ENCODE measurements at regions of chr7 and their contacts with region 1.

Region 1: DNA sequence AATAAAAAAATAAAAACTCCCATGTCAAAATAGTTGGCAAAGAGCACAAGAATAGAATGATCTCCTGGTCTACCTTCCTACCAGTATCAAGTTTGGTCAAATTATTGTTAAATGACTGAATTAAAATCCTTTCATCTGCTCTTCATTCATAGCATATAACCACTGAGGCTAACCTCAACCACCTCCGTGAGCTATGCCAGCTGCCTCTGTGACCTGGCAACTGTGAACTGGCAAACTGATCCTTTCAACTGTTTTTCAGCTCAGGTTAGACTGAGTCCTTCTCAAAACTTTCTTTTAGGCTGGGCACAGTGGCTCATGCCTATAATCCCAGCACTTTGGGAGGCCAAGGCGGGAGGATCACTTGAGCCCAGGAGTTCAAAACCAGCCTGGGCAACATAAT is 36.1 kb downstream of the NUDCD3 start:
- DNase-seq: peak; percentile 69
- ATAC-seq: peak; percentile 77
- H3K4me3 Mint-ChIP-seq: no peak overlapping the region
- H3K27ac Mint-ChIP-seq: no peak overlapping the region
- H3K4me1 Mint-ChIP-seq: peaks cover 54% of the 10 kb centered on the region
- H3K27me3 Mint-ChIP-seq: no peaks in the 10 kb centered on the region
- CTCF ChIP-seq: no peak

Region 2: GRCh38 chr7:44284216-44284615 is 170.1 kb before region 1 on chr7:
- CTCF ChIA-PET with region 1: no interaction called
- POLR2A ChIA-PET with region 1: no interaction called
- intact Hi-C with region 1: no loop called
- DNase-seq: no peak
- ATAC-seq: no peak
- H3K4me3 Mint-ChIP-seq: no peak overlapping the region
- H3K27ac Mint-ChIP-seq: no peak overlapping the region
- H3K4me1 Mint-ChIP-seq: no peaks in the 10 kb centered on the region
- H3K27me3 Mint-ChIP-seq: no peaks in the 10 kb centered on the region
- CTCF ChIP-seq: no peak

Region 3: DNA sequence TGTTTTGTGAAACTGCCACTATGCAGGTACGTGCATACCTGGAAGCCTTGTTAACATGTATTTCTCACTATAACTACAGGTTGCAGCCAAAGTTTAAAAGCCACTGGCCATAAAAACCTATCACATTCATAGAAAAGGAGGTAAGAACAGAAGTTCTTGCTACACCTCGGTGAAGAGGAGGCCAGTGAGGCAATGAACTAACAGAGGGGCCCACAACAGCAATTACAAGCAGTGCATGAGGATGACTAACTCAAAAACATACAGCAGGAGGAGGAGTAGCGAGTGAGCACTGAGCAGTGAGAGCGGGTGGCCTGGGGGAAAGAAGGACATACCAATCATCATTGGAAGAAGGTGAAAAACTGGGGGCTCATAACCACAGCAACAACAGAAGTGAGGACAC is 15.5 kb before region 1 on chr7:
- CTCF ChIA-PET with region 1: no interaction called
- POLR2A ChIA-PET with region 1: no interaction called
- intact Hi-C with region 1: no loop called
- DNase-seq: no peak
- ATAC-seq: peak; percentile 45
- H3K4me3 Mint-ChIP-seq: no peak overlapping the region
- H3K27ac Mint-ChIP-seq: no peak overlapping the region
- H3K4me1 Mint-ChIP-seq: peaks cover 54% of the 10 kb centered on the region
- H3K27me3 Mint-ChIP-seq: no peaks in the 10 kb centered on the region
- CTCF ChIP-seq: no peak

Region 4: GRCh38 chr7:44490351-44491200 is 36.2 kb after region 1 on chr7 and contains the start of gene NUDCD3:
- CTCF ChIA-PET with region 1: no interaction called
- POLR2A ChIA-PET with region 1: interaction called, 10 read pairs
- intact Hi-C with region 1: no loop called
- DNase-seq: peak; percentile 86
- ATAC-seq: peak; percentile 78
- H3K4me3 Mint-ChIP-seq: peak within 1 kb of the TSS; percentile 92
- H3K27ac Mint-ChIP-seq: peak within 1 kb of the TSS; percentile 97
- H3K4me1 Mint-ChIP-seq: peaks cover 40% of the 10 kb centered on the region
- H3K27me3 Mint-ChIP-seq: peaks cover 2% of the 10 kb centered on the region
- CTCF ChIP-seq: no peak
- total RNA-seq, gene NUDCD3: 102 to 107 TPM